ENCODE measurements at regions of chr1 and their contacts with region 1.

Region 1: GRCh38 chr1:27556781-27557595 is 47.0 kb downstream of the AHDC1 start:
- H3K4me3 Mint-ChIP-seq: peak overlapping the region; percentile 50
- H3K27ac Mint-ChIP-seq: peak overlapping the region; percentile 57
- H3K4me1 Mint-ChIP-seq: peaks cover 61% of the 10 kb centered on the region
- H3K27me3 Mint-ChIP-seq: peaks cover 5% of the 10 kb centered on the region

Region 2: GRCh38 chr1:27568300-27569087 is 11.5 kb after region 1 on chr1:
- intact Hi-C with region 1: loop called (anchors 1 kb)
- H3K4me3 Mint-ChIP-seq: peak overlapping the region; percentile 67
- H3K27ac Mint-ChIP-seq: peak overlapping the region; percentile 61
- H3K4me1 Mint-ChIP-seq: peaks cover 79% of the 10 kb centered on the region
- H3K27me3 Mint-ChIP-seq: peaks cover 18% of the 10 kb centered on the region

Region 3: GRCh38 chr1:27616441-27616840 is 59.5 kb after region 1 on chr1:
- intact Hi-C with region 1: no loop called
- H3K4me3 Mint-ChIP-seq: no peak overlapping the region
- H3K27ac Mint-ChIP-seq: peak overlapping the region; percentile 29
- H3K4me1 Mint-ChIP-seq: peaks cover 80% of the 10 kb centered on the region
- H3K27me3 Mint-ChIP-seq: no peaks in the 10 kb centered on the region